Pancreas (tissue), 10 donors: ENCODE measurements at regions of chr11 and their contacts with region 1.

Region 1: DNA sequence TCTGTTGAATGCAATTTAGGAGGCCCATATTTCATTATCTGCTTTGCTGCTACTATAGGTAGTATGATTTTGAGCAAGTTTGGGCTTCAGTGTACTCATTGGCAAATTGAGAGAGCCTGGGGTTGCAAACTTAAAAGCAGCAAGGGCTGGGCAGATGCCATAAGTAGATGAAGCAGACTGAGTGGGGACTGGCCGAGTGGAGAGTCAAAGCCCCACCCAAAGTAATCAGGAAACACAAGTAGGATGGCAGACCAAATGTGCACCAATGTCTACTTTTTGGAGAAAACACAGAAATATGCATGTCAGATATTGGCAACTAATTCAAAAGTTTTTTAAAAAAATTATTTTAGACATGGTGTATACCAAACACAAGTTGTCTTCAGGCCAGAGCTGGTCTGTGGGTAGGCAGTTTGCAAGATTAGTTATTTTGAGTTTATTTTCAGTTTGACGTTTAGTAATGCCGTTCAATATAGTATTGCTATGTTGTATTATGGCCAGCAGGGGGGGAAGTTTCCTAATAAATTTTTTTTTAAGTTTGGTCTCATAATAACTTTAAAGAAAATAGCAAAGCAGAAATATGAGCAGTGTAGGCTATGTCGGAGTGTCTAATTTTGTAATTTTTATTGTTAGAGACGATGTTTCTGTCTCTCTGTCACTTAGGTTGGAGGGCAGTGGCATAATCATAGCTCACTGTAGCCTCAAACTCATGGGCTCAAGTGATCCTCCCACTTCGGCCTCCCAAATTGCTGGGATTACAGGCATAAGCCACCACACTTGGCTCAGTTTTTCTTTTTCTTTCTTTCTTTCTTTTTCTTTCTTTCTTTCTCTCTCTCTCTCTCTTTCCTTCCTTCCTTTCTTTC is 105.1 kb downstream of the HIPK3 start:
- DNase-seq: no peak
- ATAC-seq: peak; percentile 31 to 85 (median 82)
- H3K4me3 ChIP-seq: no peak overlapping the region
- H3K27ac ChIP-seq: no peak overlapping the region
- H3K4me1 ChIP-seq: no peaks in the 10 kb centered on the region
- H3K27me3 ChIP-seq: no peaks in the 10 kb centered on the region
- CTCF ChIP-seq: peak; percentile 50 to 72 (median 58)

Region 2: GRCh38 chr11:33475993-33476392 is 113.7 kb after region 1 on chr11:
- intact Hi-C with region 1: no loop called
- DNase-seq: peak in 4 of 6 donors; percentile 17 to 55 (median 19)
- ATAC-seq: peak; percentile 57 to 75 (median 68)
- H3K4me3 ChIP-seq: no peak overlapping the region
- H3K27ac ChIP-seq: no peak overlapping the region
- H3K4me1 ChIP-seq: no peaks in the 10 kb centered on the region
- H3K27me3 ChIP-seq: no peaks in the 10 kb centered on the region
- CTCF ChIP-seq: no peak

Region 3: DNA sequence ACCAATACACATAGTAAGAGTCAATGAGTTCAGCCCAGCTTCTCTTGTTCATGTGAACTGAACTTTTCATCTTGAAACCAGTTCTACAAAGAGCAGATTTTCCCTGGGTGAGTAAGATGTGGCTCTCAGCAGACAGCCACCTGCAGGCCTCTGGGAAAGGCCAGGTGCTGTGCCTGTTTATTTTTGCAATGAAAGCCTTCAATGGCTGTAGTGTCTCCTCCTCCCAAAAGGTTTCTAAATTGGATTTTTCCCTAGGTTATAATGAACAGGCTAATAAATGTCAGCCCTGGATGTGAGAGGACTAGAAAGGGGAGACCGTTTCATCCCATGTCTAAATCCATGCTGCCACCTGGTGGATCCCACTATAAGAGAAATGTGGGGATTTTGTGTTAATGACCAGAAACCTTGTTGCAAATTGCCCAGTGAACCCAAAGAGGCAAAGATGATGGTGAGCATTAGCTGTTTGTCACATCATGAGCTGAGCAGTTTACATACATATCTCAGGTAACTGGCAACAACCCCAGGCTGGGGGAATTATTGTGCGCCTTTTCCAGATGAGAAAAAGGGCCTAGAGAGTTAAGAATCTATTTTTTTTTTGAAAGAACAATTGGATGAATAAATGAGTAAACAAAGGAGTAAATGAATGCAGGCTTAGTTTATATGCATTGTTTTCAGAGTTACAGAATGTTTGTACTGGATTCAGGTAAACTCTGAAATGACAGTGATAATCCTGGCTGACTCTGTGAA is 325.6 kb after region 1 on chr11:
- intact Hi-C with region 1: loop called in 2 of 3 experiments (anchors 5 to 10 kb)
- DNase-seq: peak in 1 of 6 donors; percentile 49
- ATAC-seq: peak in 2 of 4 donors; percentile 12 to 21
- H3K4me3 ChIP-seq: no peak overlapping the region
- H3K27ac ChIP-seq: no peak overlapping the region
- H3K4me1 ChIP-seq: peaks cover 11 to 39% (median 20%) of the 10 kb centered on the region in 3 donors
- H3K27me3 ChIP-seq: no peaks in the 10 kb centered on the region
- CTCF ChIP-seq: peak in 3 of 4 donors; percentile 10 to 38 (median 30)

Region 4: GRCh38 chr11:33742249-33742851 is 380.1 kb after region 1 on chr11:
- intact Hi-C with region 1: loop called in 2 of 3 experiments (anchors 10 kb)
- DNase-seq: no peak
- ATAC-seq: peak in 3 of 4 donors; percentile 75 to 81 (median 80)
- H3K4me3 ChIP-seq: no peak overlapping the region
- H3K27ac ChIP-seq: no peak overlapping the region
- H3K4me1 ChIP-seq: peaks cover 0 to 11% (median 0%) of the 10 kb centered on the region in 3 donors
- H3K27me3 ChIP-seq: no peaks in the 10 kb centered on the region
- CTCF ChIP-seq: peak in 3 of 4 donors; percentile 30 to 48 (median 30)

Region 5: GRCh38 chr11:33829433-33830141 is 467.3 kb after region 1 on chr11:
- intact Hi-C with region 1: loop called in 1 of 3 experiments (anchors 10 kb)
- DNase-seq: peak in 3 of 6 donors; percentile 34 to 65 (median 37)
- ATAC-seq: peak; percentile 86 to 97 (median 96)
- H3K4me3 ChIP-seq: peak overlapping the region; percentile 23 to 51 (median 34)
- H3K27ac ChIP-seq: no peak overlapping the region
- H3K4me1 ChIP-seq: peaks cover 0 to 7% (median 3%) of the 10 kb centered on the region in 3 donors
- H3K27me3 ChIP-seq: peaks cover 0 to 3% (median 0%) of the 10 kb centered on the region in 4 donors
- CTCF ChIP-seq: peak; percentile 31 to 59 (median 56)

Region 6: DNA sequence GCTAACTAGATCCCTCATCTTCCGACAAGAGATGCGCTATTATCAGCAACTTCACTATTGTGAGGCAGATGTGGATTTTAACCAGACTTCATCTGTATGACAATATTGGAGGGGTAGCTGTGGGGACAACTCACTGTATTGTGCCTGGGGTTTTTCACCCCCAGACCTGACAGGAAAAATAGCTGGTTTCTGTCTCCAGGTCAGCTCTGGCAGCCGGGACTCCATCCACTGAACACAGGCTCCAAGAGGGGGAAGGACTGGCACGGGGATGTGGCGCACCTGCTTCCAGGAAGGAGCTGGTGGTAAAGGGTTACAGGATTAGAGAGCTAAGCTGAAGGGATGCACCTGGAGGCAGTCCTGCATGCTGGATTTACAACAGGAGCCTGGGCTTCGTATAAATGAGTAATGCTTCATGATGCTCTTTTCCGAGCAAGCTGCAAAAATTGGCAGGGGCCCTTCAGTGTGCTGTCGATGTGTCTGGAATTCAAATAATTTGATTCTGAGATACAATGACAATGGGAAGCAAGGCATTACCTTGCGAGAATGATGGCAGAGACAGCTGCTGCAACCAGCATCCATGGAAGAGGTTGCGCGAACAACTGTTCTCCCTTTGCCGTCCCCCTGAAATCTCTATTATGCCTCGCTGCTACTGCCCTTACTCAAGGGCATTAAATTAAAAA is 480.1 kb after region 1 on chr11:
- intact Hi-C with region 1: loop called in 1 of 3 experiments (anchors 10 kb)
- DNase-seq: no peak
- ATAC-seq: no peak
- H3K4me3 ChIP-seq: no peak overlapping the region
- H3K27ac ChIP-seq: no peak overlapping the region
- H3K4me1 ChIP-seq: no peaks in the 10 kb centered on the region
- H3K27me3 ChIP-seq: no peaks in the 10 kb centered on the region
- CTCF ChIP-seq: no peak